ENCODE measurements at regions of chr7 and their contacts with region 1.

Region 1: DNA sequence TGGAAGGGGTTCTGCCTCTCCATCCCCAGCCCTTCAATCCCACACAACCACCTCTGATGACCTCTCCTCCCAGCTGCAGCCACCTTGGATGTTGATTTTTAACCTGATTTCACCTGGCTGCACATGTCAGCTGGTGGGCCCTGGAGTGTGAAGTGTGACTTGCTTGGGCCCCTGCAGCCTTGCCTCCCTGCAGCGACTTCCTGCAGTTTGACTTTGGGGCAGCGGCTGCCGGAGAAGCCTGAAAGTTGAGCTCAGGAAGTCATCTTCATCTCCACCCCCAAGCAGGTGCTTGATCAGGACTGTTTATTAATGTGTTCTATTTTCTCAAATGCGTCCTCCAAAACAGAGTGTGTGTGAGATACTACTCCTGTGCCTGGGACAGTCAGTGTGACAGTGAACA is 675.2 kb upstream of the GALNT17 start:
- DNase-seq: peak; percentile 96
- H3K4me3 ChIP-seq: peak overlapping the region; percentile 41
- H3K27ac ChIP-seq: peak overlapping the region; percentile 95
- H3K4me1 ChIP-seq: peaks cover 54% of the 10 kb centered on the region
- CTCF ChIP-seq: no peak

Region 2: GRCh38 chr7:70237831-70238575 is 218.7 kb before region 1 on chr7:
- CTCF ChIA-PET with region 1: no interaction called
- POLR2A ChIA-PET with region 1: interaction called, 4 read pairs
- intact Hi-C with region 1: loop called (anchors 5 kb)
- DNase-seq: peak; percentile 79
- H3K4me3 ChIP-seq: peak overlapping the region; percentile 1
- H3K27ac ChIP-seq: peak overlapping the region; percentile 72
- H3K4me1 ChIP-seq: peaks cover 22% of the 10 kb centered on the region
- CTCF ChIP-seq: no peak

Region 3: GRCh38 chr7:70426249-70426880 is 30.4 kb before region 1 on chr7:
- CTCF ChIA-PET with region 1: no interaction called
- POLR2A ChIA-PET with region 1: interaction called, 15 read pairs
- intact Hi-C with region 1: loop called (anchors 1 kb)
- DNase-seq: peak; percentile 90
- H3K4me3 ChIP-seq: peak overlapping the region; percentile 46
- H3K27ac ChIP-seq: peak overlapping the region; percentile 91
- H3K4me1 ChIP-seq: peaks cover 57% of the 10 kb centered on the region
- CTCF ChIP-seq: no peak

Region 4: GRCh38 chr7:70477036-70478010 is 20.6 kb after region 1 on chr7:
- CTCF ChIA-PET with region 1: no interaction called
- POLR2A ChIA-PET with region 1: interaction called, 18 read pairs
- intact Hi-C with region 1: no loop called
- DNase-seq: no peak
- H3K4me3 ChIP-seq: no peak overlapping the region
- H3K27ac ChIP-seq: no peak overlapping the region
- H3K4me1 ChIP-seq: no peaks in the 10 kb centered on the region
- CTCF ChIP-seq: no peak

Region 5: DNA sequence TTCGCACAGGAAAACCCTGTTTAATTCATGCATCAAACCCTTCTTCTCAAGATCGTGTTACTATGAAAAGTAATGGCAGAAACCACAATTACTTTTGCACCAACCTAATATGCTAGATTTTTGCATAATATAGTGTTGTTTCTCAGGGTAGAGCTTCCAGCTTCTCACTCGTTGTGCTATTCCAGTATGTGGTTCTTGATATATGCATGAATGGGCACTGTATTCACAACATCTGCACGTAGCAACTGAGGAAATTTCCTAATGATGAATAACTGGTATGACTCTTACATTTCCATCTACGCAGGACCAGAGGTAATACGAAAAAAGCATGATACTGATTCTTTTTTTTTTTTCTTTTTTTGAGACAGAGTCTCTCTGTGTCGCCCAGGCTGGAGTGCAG is 348.6 kb after region 1 on chr7:
- CTCF ChIA-PET with region 1: no interaction called
- POLR2A ChIA-PET with region 1: no interaction called
- intact Hi-C with region 1: loop called (anchors 5 kb)
- DNase-seq: peak; percentile 59
- H3K4me3 ChIP-seq: peak overlapping the region; percentile 50
- H3K27ac ChIP-seq: peak overlapping the region; percentile 42
- H3K4me1 ChIP-seq: peaks cover 42% of the 10 kb centered on the region
- CTCF ChIP-seq: no peak

Measured in OCI-LY7 (cell line).